ENCODE measurements at regions of chr9 and their contacts with region 1.

Region 1: GRCh38 chr9:91727316-91727861 is 222.6 kb downstream of the ROR2 start:
- H3K4me3 Mint-ChIP-seq: no peak overlapping the region
- H3K27ac Mint-ChIP-seq: no peak overlapping the region
- H3K4me1 Mint-ChIP-seq: no peaks in the 10 kb centered on the region
- H3K27me3 Mint-ChIP-seq: peaks cover 10% of the 10 kb centered on the region

Region 2: GRCh38 chr9:90914868-90915483 is 812.4 kb before region 1 on chr9:
- intact Hi-C with region 1: loop called (anchors 5 kb)
- H3K4me3 Mint-ChIP-seq: no peak overlapping the region
- H3K27ac Mint-ChIP-seq: no peak overlapping the region
- H3K4me1 Mint-ChIP-seq: peaks cover 11% of the 10 kb centered on the region
- H3K27me3 Mint-ChIP-seq: peaks cover 4% of the 10 kb centered on the region

Region 3: DNA sequence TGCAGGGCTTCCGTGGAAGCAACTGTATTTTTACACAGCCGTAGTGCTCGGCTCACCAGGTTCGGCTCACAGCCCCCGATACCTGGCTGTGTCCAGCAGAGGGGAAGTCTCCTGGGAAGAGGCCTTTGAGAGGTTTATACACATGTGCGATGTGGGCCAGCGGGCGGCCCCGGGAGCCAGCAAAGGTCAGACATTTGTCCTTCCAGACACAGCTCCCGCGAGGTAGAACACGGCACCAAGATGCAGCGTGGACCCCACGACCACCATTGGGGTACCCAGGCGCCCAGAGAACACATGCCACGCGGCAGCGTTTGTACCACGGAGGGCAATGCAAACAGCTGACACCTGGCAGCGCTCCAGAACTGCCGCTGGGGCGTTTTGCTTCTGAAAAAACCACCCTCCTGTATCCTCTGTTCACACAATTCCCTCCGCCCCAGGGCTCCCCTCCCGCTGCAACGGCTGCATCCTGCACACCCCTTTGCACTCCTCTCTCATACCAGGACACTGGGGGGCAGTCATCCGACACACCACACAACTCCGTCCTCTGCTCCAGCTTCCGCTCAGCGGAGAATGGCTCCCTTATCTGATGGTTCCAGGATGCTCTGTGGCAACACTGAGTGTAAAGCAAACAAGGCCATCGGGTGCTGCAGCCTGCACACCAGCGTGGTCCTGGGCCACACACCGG is 690.4 kb before region 1 on chr9:
- intact Hi-C with region 1: loop called (anchors 10 kb)
- H3K4me3 Mint-ChIP-seq: peak overlapping the region; percentile 46
- H3K27ac Mint-ChIP-seq: peak overlapping the region; percentile 52
- H3K4me1 Mint-ChIP-seq: peaks cover 53% of the 10 kb centered on the region
- H3K27me3 Mint-ChIP-seq: peaks cover 23% of the 10 kb centered on the region

Region 4: GRCh38 chr9:91659529-91660495 is 67.6 kb before region 1 on chr9:
- intact Hi-C with region 1: loop called (anchors 10 kb)
- H3K4me3 Mint-ChIP-seq: no peak overlapping the region
- H3K27ac Mint-ChIP-seq: no peak overlapping the region
- H3K4me1 Mint-ChIP-seq: peaks cover 19% of the 10 kb centered on the region
- H3K27me3 Mint-ChIP-seq: peaks cover 29% of the 10 kb centered on the region

Region 5: DNA sequence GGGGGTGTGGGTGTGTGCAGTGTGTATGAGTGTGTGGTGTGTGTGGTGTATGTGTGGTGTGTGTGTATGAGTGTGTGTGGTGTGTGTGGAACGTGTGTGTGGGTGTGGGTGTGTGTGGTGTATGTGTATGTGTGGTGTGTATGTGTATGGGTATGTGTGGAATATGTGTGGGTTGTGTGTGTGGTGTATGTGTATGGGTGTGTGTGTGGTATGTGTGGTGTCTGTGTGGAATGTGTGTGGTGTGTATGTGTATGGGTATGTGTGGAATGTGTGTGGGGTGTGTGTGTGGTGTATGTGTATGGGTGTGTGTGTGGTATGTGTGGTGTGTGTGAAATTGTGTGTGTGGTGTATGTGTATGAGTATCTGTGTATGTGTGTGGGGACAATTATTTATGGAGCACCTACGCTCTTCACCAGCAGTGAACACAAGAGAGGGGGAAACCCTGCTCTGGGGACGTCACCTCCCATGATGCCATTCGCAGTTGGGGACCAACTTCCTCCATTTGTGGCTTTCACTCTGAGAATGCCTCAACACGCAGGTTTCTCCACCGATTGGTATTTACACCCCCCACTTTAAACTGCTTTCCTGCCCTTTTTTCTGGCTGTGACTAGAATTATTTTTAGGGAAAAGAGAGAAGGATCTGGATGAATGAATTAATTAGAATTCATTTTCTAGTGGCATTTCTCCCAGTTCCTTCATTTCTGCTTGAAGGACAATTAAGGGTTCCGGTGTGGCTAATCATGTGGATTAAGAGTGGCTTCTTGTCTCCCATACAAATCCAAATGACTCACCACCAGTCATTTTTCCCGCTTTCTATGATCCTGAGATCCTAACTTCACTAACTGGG is 15.4 kb before region 1 on chr9:
- intact Hi-C with region 1: no loop called
- H3K4me3 Mint-ChIP-seq: no peak overlapping the region
- H3K27ac Mint-ChIP-seq: no peak overlapping the region
- H3K4me1 Mint-ChIP-seq: peaks cover 6% of the 10 kb centered on the region
- H3K27me3 Mint-ChIP-seq: peaks cover 7% of the 10 kb centered on the region

Region 6: GRCh38 chr9:91873637-91874051 is 146.3 kb after region 1 on chr9:
- intact Hi-C with region 1: no loop called
- H3K4me3 Mint-ChIP-seq: no peak overlapping the region
- H3K27ac Mint-ChIP-seq: no peak overlapping the region
- H3K4me1 Mint-ChIP-seq: no peaks in the 10 kb centered on the region
- H3K27me3 Mint-ChIP-seq: peaks cover 30% of the 10 kb centered on the region

Measured in dendritic cell treated with granulocyte-macrophage colony-stimulating factor and Interleukin-4, amounts not matched to agents 40 ng/mL and 50 ng/mL, for 4 days (primary cell).